OCI-LY7 (cell line): ENCODE measurements at regions of chr18 and their contacts with region 1.

Region 1: DNA sequence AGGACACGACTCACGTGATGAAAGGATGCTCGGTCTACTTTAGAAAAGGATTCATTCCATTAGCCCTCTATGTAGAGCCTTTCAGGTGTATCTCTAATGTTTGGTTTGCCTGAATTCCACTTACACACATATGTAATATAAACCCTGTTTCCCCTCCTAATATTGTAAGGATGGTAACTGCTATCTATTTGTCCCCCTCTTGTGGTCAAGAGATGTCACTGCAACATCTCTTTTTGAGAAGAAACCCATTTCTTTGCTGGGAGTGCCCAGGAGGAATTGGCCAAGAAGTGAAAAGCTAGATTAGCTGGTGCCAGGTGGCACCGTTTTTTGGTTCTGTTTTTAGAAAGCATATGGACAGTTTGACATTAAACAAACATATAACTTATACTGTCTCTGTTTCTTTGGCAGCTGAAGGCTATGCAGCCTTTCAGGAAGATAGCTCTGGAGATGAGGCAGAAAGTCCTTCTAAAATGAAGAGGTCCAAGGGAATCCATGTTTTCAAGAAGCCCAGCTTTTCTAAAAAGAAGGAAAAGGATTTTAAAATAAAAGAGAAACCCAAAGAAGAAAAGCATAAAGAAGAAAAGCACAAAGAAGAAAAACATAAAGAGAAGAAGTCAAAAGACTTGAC is 41.2 kb downstream of the RALBP1 start:
- DNase-seq: peak; percentile 64
- H3K4me3 ChIP-seq: no peak overlapping the region
- H3K27ac ChIP-seq: no peak overlapping the region
- H3K4me1 ChIP-seq: no peaks in the 10 kb centered on the region
- CTCF ChIP-seq: peak; percentile 97

Region 2: DNA sequence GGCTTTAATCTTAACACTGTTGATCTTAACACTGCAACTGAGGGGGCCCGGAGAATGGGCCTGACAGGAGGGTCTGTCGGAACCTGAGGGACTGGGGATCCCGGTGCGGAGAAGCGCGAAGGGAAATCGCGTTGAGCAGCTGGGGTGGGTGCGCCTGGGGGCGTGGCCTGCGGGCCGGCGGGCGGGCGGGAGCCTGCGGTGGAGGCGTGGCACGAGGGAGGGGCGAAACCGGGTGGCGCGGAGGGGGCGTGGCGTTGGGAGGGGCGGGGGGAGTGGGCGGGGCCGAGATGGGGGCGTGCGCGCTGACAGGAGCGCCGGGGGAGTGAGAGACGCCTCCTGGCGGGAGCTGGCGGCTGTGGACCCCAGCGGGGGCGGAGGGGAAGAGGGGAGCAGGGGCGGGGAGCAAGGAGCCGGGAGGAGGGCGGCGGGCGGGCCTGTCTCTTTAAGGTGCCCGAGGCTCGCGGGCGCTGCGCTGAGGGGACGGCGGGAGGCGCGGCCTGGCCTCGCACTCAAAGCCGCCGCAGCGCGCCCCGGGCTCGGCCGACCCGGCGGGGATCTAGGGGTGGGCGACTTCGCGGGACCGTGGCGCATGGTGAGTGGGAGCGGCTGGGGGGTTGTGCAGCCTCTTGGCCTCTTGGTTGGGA is 182.1 kb before region 1 on chr18 and contains the start of gene TWSG1:
- CTCF ChIA-PET with region 1: no interaction called
- POLR2A ChIA-PET with region 1: no interaction called
- intact Hi-C with region 1: loop called (anchors 2 kb)
- DNase-seq: peak; percentile 96
- H3K4me3 ChIP-seq: peak within 1 kb of the TSS; percentile 96
- H3K27ac ChIP-seq: no peak within 1 kb of the TSS
- H3K4me1 ChIP-seq: peaks cover 8% of the 10 kb centered on the region
- CTCF ChIP-seq: peak; percentile 32; the same call in 1 of the 2 replicates
- total RNA-seq, gene TWSG1: 7.4 and 7.5 TPM in 2 replicates

Region 3: GRCh38 chr18:9417073-9417841 is 99.3 kb before region 1 on chr18:
- CTCF ChIA-PET with region 1: no interaction called
- POLR2A ChIA-PET with region 1: no interaction called
- intact Hi-C with region 1: loop called (anchors 5 kb)
- DNase-seq: no peak
- H3K4me3 ChIP-seq: no peak overlapping the region
- H3K27ac ChIP-seq: no peak overlapping the region
- H3K4me1 ChIP-seq: no peaks in the 10 kb centered on the region
- CTCF ChIP-seq: no peak

Region 4: GRCh38 chr18:9474983-9475642 is 41.4 kb before region 1 on chr18 and contains the start of gene RALBP1:
- CTCF ChIA-PET with region 1: no interaction called
- POLR2A ChIA-PET with region 1: no interaction called
- intact Hi-C with region 1: loop called (anchors 2 kb)
- DNase-seq: peak; percentile 99
- H3K4me3 ChIP-seq: peak within 1 kb of the TSS; percentile 99
- H3K27ac ChIP-seq: peak within 1 kb of the TSS; percentile 85
- H3K4me1 ChIP-seq: peaks cover 30% of the 10 kb centered on the region
- CTCF ChIP-seq: 0 out of 2 replicates have a peak, but pooled peaks have one; percentile 23
- total RNA-seq, gene RALBP1: 78.5 and 80.2 TPM in 2 replicates

Region 5: DNA sequence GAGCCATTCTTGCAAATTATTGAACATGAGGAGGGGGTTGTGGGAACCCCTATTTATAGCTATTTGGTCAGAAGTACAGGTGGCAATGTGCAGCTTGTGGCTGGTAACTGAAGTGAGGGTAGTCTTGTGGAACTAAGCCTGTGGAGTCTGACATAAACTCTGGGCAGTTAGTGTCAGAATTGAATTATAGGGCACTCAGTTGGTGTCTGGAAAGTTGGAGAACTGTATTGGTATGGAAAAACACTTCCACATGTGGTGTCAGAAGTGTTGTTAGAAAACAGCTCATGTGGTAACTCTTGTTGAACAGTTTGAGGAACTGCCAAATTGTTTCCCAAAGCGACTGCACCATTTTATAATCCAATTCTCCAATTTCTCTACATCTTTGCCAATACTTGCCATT is 33.8 kb before region 1 on chr18:
- CTCF ChIA-PET with region 1: no interaction called
- POLR2A ChIA-PET with region 1: interaction called, 4 read pairs
- intact Hi-C with region 1: loop called (anchors 1 kb)
- DNase-seq: peak; percentile 80
- H3K4me3 ChIP-seq: peak overlapping the region; percentile 58
- H3K27ac ChIP-seq: peak overlapping the region; percentile 90
- H3K4me1 ChIP-seq: peaks cover 72% of the 10 kb centered on the region
- CTCF ChIP-seq: no peak